HEK293 (cell line): ENCODE measurements at regions of chr3 and their contacts with region 1.

Region 1: GRCh38 chr3:48663415-48664312 is 978 bp upstream of the CELSR3 start:
- H3K4me3 ChIP-seq: peak overlapping the region; percentile 60
- H3K27ac ChIP-seq: peak overlapping the region; percentile 51; the same call in 1 of the 2 replicates
- H3K4me1 ChIP-seq: no peaks in the 10 kb centered on the region
- CTCF ChIP-seq: peak; percentile 85

Region 2: DNA sequence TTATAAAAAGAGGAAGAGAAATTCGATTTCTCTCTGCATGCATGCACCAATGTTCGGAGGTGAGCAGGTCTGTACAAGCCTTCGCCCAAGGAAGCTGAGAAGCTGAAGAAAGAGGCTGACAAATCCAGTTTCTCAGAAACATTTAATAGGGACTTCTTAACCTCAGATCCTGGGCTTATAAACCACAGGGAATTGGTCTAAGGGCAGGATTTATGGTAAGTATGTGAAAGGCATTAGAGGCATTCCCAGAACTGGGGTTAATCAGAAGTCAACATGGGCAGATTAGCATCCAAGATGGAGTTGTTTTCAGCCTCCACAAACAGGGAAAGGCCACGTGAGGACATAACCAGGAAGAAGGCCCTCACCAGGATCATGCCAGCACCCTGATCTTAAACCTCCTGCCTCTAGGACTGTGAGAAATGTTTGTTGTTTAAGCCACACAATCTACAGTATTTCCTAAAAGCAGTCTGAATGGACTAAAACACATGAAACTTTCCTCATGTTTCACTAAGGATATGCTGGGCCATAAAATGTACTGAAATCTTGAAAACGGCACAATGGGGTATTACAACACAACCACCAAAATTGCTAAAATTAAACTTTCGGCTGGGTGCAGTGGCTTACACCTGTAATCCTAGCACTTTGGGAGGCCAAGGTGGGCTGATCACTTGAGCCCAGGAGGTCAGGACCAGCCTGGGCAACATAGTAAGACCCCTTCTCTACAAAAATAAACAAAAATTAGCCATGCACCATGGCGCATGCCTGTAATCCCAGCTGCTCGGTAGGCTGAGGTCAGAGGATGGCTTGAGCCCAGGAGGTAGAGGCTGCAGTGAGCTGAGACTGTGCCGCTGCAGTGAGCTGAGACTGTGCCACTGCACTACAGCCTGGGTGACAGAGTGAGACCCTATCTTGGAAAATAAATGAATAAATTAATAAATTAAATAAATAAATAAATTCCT is 170.8 kb before region 1 on chr3:
- CTCF ChIA-PET with region 1: no interaction called
- POLR2A ChIA-PET with region 1: no interaction called
- H3K4me3 ChIP-seq: no peak overlapping the region
- H3K27ac ChIP-seq: no peak overlapping the region
- H3K4me1 ChIP-seq: no peaks in the 10 kb centered on the region
- CTCF ChIP-seq: no peak

Region 3: GRCh38 chr3:48635222-48636021 is 28.2 kb before region 1 on chr3 and contains the start of gene SLC26A6:
- CTCF ChIA-PET with region 1: interaction called, 4 read pairs
- POLR2A ChIA-PET with region 1: interaction called, 13 read pairs
- H3K4me3 ChIP-seq: peak within 1 kb of the TSS; percentile 75
- H3K27ac ChIP-seq: peak within 1 kb of the TSS; percentile 55; the same call in 1 of the 2 replicates
- H3K4me1 ChIP-seq: no peaks in the 10 kb centered on the region
- CTCF ChIP-seq: no peak; the same call in 1 of the 2 replicates

Region 4: DNA sequence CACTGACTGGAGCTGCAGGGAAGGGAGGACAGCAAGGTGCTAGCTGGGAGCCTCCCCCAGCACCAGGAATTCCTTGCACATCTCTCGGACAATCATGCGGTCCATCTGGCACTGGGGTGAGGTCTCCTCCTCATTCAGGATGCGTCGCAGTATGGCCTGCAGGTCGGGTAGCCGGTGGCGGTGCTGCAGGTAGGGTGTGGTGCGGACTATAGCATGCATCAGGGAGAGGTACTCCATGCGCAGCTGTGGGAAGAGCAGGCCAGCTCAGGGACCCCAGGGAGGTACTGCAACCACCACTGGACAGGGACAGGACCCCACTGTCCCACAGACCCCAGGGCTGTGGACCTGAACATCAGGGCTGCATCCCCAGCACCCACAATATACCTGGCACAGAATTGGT is 10.8 kb after region 1 on chr3:
- CTCF ChIA-PET with region 1: interaction called, 7 read pairs
- POLR2A ChIA-PET with region 1: interaction called, 12 read pairs
- H3K4me3 ChIP-seq: no peak overlapping the region
- H3K27ac ChIP-seq: no peak overlapping the region
- H3K4me1 ChIP-seq: no peaks in the 10 kb centered on the region
- CTCF ChIP-seq: no peak

Region 5: DNA sequence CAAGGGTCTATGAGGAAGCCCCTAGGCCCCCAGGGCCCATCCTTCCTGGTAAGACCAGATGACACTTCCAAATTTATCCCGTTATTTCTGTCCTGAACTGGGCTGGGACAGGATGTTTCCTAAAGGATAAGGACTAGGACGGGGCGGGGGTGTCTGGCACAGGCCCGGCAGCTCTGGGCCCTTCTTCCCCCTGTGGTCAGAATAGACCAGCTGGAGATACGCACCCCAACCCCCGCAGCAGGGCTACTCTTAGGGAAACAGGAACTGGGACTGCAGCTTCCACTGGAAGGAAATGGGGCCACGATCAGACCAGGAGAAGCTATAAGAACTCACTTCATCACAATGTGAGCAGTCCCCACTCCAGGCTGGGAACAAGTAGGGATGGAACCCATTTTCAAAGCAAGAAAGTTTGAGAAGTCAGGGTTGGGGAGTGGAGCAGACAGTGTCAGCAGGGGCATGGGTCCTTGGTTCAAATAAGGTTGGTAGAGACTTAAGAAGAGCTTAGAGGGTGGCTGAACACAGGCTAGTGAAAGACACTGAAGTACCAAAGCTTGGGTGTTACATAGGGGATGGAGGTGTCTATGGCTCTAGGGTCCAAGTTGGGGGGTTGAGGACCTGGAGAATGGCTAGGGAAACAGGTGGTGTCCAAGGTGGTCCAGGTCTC is 20.9 kb after region 1 on chr3:
- CTCF ChIA-PET with region 1: interaction called, 13 read pairs
- POLR2A ChIA-PET with region 1: interaction called, 4 read pairs
- H3K4me3 ChIP-seq: peak overlapping the region; percentile 98
- H3K27ac ChIP-seq: no peak overlapping the region
- H3K4me1 ChIP-seq: peaks cover 9% of the 10 kb centered on the region
- CTCF ChIP-seq: no peak

Region 6: GRCh38 chr3:48851407-48851806 is 187.7 kb after region 1 on chr3:
- CTCF ChIA-PET with region 1: no interaction called
- POLR2A ChIA-PET with region 1: no interaction called
- H3K4me3 ChIP-seq: no peak overlapping the region
- H3K27ac ChIP-seq: no peak overlapping the region
- H3K4me1 ChIP-seq: no peaks in the 10 kb centered on the region
- CTCF ChIP-seq: no peak

Region 7: DNA sequence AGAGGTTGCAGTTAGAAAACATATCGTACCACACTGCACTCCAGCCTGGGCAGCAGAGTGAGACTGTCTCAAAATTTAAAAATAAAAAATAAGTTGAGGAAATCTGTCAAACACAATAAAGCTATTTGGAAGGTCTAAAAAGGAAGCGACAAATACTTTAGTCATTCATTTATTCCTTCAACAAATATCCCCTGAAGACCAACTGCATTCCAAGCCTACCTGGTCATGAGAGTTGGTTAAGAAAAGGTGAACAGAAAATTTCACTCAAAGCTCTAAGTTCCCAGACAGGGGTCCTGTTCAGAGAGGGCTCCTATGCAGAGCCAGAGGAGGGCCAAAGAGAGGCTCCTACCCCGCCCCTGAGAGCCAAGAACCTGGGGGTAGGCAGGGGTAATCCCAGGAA is 199.5 kb after region 1 on chr3:
- CTCF ChIA-PET with region 1: no interaction called
- POLR2A ChIA-PET with region 1: no interaction called
- H3K4me3 ChIP-seq: no peak overlapping the region
- H3K27ac ChIP-seq: no peak overlapping the region
- H3K4me1 ChIP-seq: no peaks in the 10 kb centered on the region
- CTCF ChIP-seq: no peak